Activated CD4-positive, alpha-beta T cell treated with anti-CD3 and anti-CD28 coated beads for 36 hours (primary cell): ENCODE measurements at regions of chr12 and their contacts with region 1.

Region 1: GRCh38 chr12:121060149-121061001 is 21.3 kb upstream of the OASL start:
- DNase-seq: peak; percentile 79
- ATAC-seq: peak; percentile 91
- H3K4me3 Mint-ChIP-seq: peak overlapping the region; percentile 60
- H3K27ac Mint-ChIP-seq: peak overlapping the region; percentile 90
- H3K4me1 Mint-ChIP-seq: peaks cover 14% of the 10 kb centered on the region
- H3K27me3 Mint-ChIP-seq: no peaks in the 10 kb centered on the region

Region 2: DNA sequence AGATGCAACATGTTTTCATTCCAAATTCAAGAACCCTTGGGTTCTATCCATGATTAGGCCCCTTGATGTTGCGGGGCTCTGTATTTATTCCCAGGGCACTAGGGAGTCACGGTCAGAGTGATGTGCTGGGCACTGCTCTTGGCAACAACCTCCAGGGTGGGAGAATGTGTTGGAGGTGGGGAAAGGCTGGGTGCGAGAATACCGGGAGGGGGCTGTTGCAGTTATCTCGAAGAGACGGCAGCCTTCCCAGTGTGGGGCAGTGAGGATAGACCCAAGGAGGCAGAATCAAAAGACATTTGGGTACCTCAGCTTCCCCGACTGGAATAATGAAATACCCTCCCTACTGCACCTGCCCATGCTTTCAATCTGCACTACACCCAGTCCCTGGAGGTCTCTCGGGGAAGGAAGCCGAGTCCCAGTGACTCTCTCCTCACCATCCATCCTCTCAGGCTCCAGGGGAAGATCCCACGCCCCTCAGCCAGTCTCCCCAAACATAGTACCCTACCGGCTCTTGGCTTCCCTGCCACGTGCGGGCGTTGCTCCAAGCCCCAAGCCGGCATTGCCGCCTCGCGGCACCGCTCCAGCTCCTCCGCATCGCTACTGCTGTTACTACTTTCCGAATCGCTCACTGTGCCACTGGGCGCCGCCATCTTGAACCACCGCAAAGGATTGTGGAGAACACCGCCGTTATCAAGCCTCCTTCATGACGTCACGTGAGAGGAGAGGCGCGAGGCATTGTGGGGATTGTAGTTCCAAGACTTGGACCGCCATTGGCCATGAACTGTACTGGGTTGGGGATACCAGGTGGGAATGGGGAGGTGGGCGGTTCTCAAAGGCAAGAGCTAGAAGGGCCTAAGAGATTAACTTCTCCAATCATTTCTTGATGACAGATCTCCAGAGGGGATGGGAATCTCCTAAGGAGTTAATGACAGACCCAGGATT is 44.3 kb before region 1 on chr12 and contains the start of gene C12orf43:
- CTCF ChIA-PET with region 1: interaction called, 11 read pairs
- POLR2A ChIA-PET with region 1: interaction called, 4 read pairs
- intact Hi-C with region 1: loop called (anchors 1 kb)
- DNase-seq: peak; percentile 97
- ATAC-seq: peak; percentile 99
- H3K4me3 Mint-ChIP-seq: peak within 1 kb of the TSS; percentile 91
- H3K27ac Mint-ChIP-seq: peak within 1 kb of the TSS; percentile 92
- H3K4me1 Mint-ChIP-seq: peaks cover 16% of the 10 kb centered on the region
- H3K27me3 Mint-ChIP-seq: no peaks in the 10 kb centered on the region
- total RNA-seq, gene C12orf43: 22.8 to 23.8 TPM

Region 3: DNA sequence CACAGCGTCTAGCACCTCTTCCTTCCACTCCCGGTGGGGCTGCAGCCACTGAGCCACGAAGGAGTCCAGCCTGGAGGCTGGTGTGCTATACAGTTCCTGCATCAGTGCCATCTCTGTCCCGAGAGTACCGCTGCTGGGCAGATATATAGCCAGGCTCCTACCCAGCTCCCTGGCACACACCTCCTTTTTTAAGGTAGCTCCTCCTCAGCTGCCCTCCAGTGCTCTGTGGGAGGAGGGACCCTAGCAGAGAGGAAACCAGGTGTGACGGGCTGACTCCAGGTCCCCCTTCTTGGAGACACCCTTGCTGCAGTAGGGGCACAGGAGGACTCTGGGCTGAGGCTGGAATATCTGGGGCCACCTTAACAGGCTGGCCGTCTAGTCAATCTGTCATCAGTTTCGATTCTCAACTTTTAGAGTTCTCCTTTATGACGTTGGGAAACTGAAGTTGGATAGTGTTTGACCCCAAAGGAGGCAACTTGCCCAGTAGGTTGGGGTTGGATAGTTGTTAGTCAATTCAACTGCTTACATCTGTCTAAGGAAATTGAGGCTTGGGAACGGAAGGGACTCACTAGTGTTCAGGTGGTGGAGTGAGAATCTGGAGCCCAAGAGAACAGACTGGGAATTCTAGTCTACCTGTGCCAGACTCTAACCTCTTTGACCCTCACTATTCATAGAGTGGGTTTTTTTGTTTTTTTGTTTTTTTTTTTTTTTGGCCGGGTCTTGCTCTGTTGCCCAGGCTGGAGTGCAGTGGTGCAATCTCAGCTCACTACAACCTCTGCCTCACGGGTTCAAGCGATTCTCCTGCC is 21.3 kb before region 1 on chr12 and contains the start of gene OASL:
- CTCF ChIA-PET with region 1: interaction called, 13 read pairs
- POLR2A ChIA-PET with region 1: no interaction called
- intact Hi-C with region 1: loop called (anchors 1 to 2 kb)
- DNase-seq: peak; percentile 72
- ATAC-seq: peak; percentile 58
- H3K4me3 Mint-ChIP-seq: peak within 1 kb of the TSS; percentile 78
- H3K27ac Mint-ChIP-seq: peak within 1 kb of the TSS; percentile 91
- H3K4me1 Mint-ChIP-seq: peaks cover 52% of the 10 kb centered on the region
- H3K27me3 Mint-ChIP-seq: peaks cover 14% of the 10 kb centered on the region
- total RNA-seq, gene OASL: 13.9 to 19.6 TPM

Region 4: DNA sequence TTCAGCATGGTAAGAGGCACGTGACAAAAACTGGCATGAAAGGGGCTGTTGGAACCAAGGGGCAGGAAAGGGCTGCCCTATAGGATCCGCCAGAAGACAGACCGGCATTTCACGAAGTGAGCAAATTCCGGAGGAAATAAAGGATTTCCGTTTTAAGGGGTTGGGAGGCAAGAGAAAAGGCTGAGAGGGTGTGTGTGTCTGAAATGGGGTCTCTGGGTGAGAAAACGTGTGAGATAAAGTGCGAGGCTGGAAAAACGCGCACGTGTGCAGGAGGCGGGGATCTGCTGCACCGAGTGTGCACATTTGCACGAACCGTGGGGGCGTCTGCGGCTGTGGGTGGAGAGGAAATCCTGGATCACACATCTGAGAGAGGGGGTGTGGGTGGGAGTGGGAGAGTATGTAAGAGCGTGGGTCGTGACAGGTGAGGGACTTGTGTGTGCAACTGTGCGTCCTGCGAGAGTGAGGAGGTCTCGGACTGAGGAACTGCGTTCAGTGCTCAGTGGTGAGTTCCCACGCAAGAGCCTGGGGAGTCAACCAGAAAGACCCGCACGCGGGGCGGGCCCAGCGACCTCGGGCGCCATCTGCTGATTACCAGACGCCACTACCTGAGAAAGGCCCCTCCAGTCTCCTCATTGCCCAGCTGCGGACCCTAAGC is 35.3 kb after region 1 on chr12:
- CTCF ChIA-PET with region 1: interaction called, 30 read pairs
- POLR2A ChIA-PET with region 1: no interaction called
- intact Hi-C with region 1: loop called (anchors 1 kb)
- DNase-seq: peak; percentile 88
- ATAC-seq: peak; percentile 88
- H3K4me3 Mint-ChIP-seq: peak overlapping the region; percentile 65
- H3K27ac Mint-ChIP-seq: peak overlapping the region; percentile 56
- H3K4me1 Mint-ChIP-seq: peaks cover 43% of the 10 kb centered on the region
- H3K27me3 Mint-ChIP-seq: peaks cover 5% of the 10 kb centered on the region

Region 5: DNA sequence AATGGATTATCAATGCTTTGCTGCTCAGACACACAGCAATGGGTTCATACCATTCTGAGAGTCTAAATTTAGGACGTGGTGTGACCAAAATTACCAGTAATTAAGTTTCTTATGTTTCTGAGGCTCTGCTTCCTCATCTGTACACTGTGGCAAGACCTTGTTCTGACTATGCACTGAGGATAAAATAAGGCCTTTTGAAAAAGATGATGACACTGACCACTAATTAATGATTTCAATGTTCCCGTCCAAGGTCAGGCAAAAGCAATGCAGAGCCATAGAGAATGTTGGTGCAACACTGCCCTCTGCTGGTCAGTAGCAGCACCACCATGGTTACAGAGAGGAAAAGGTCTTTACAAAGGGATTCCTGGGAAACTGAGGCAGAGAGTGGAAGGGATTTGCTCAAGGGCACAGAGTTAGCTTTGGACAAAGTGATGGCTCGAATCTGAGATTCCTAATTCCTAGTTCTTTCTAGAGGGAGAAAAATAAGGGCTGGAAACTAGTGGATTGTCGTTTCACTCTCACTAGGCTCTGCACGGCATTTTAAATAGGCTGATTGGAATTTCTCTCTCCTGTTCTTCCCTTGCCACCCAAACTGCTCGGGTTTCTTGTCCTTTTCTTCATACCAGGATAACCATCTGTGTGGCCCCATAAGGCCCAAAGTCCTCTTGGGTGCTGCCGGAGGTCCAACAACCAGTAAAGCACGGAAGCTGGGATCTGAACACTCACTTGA is 50.0 kb after region 1 on chr12:
- CTCF ChIA-PET with region 1: interaction called, 7 read pairs
- POLR2A ChIA-PET with region 1: no interaction called
- intact Hi-C with region 1: loop called (anchors 1 kb)
- DNase-seq: peak; percentile 81
- ATAC-seq: peak; percentile 85
- H3K4me3 Mint-ChIP-seq: no peak overlapping the region
- H3K27ac Mint-ChIP-seq: no peak overlapping the region
- H3K4me1 Mint-ChIP-seq: peaks cover 5% of the 10 kb centered on the region
- H3K27me3 Mint-ChIP-seq: no peaks in the 10 kb centered on the region

Region 6: DNA sequence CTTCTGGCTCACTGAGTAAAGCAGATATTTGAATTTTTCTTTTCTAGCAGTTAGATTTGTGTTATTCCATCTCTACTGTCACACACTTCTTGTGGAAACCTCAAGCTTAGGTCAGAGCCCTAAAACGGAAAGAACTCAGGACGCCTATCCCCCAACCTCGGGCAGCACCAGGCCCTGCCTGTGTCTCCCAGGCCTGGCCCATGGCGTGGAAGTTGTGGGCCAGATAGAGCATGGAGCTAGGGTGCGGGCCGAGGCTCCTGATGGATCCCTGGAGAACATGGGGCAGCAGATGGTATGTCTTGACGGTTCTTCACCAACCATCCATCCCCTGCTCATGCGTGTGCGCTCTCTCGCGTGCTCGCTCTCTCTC is 170.1 kb after region 1 on chr12:
- CTCF ChIA-PET with region 1: interaction called, 3 read pairs
- POLR2A ChIA-PET with region 1: no interaction called
- intact Hi-C with region 1: loop called in 1 of 2 experiments (anchors 1 kb)
- DNase-seq: no peak
- ATAC-seq: no peak
- H3K4me3 Mint-ChIP-seq: no peak overlapping the region
- H3K27ac Mint-ChIP-seq: no peak overlapping the region
- H3K4me1 Mint-ChIP-seq: peaks cover 25% of the 10 kb centered on the region
- H3K27me3 Mint-ChIP-seq: no peaks in the 10 kb centered on the region